ENCODE measurements at regions of chr4 and their contacts with region 1.

Region 1: DNA sequence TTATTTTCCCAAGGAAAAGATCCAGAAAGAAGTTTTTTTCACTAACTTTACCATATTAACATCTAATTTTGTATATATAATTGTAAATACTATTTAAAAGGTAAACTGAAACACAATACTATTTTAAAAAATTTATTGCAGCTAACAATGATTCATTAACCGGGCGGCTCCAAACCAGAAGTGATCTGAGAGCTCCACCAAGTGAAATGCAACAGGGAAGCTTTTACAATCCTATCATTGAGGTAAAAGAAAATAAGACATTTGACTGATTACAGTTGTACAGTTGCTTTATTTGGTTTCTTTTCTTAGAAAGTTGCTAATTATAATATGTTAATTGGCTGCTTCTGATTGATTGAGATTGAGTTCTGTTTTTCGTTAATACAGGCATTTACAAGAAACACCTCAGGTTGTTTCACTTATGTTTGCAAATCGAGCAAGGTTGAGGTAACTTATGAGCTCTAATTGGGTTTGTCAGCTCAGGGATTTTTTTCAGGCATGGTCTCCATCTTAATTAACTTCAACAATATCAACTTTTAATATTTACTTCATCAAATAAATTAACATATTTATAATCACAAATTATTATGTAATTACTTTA is 220.2 kb upstream of the UGT8 start:
- DNase-seq: peak; percentile 32
- H3K4me3 ChIP-seq: no peak overlapping the region
- H3K27ac ChIP-seq: no peak overlapping the region
- H3K4me1 ChIP-seq: peaks cover 6% of the 10 kb centered on the region
- H3K27me3 ChIP-seq: no peaks in the 10 kb centered on the region
- CTCF ChIP-seq: peak; percentile 73 to 74

Region 2: GRCh38 chr4:113547487-113548042 is 830.8 kb before region 1 on chr4:
- CTCF ChIA-PET with region 1: no interaction called
- dilution Hi-C with region 1: no loop called
- in situ Hi-C with region 1: no loop called
- intact Hi-C with region 1: loop called (anchors 5 kb)
- DNase-seq: peak; percentile 98
- H3K4me3 ChIP-seq: no peak overlapping the region
- H3K27ac ChIP-seq: peak overlapping the region; percentile 34
- H3K4me1 ChIP-seq: no peaks in the 10 kb centered on the region
- H3K27me3 ChIP-seq: no peaks in the 10 kb centered on the region
- CTCF ChIP-seq: peak; percentile 98 to 99

Region 3: DNA sequence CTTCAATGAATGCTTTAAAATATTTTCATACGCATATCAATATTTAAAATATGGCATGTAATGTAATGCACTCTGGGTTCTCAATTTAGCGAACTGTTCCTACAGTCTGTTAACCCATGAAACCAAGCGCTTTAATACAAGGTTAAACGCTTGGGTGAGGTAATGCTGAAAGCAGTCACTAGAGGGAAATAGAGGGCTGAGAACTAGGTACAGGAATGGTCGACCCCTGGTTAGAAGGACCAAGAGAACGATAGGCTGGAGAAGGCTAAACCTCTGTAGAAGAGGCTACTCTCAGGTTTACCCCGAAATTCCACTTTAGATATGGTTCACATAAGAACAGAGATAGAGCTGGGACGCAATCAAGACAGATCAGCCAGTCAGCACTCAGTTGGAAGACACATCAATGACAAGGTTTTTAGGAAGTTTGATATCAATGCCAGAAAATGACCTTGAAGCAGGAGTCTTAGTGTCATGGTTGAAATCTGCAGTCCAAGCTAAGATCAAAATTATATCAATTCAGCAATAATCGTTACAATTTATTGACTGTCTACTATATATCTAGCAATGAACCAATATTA is 425.9 kb before region 1 on chr4:
- CTCF ChIA-PET with region 1: interaction called, 4 read pairs
- dilution Hi-C with region 1: no loop called
- in situ Hi-C with region 1: no loop called
- intact Hi-C with region 1: loop called (anchors 1 kb)
- DNase-seq: peak; percentile 27
- H3K4me3 ChIP-seq: no peak overlapping the region
- H3K27ac ChIP-seq: no peak overlapping the region
- H3K4me1 ChIP-seq: no peaks in the 10 kb centered on the region
- H3K27me3 ChIP-seq: no peaks in the 10 kb centered on the region
- CTCF ChIP-seq: peak; percentile 69 to 75

Region 4: GRCh38 chr4:114132830-114133229 is 245.6 kb before region 1 on chr4:
- CTCF ChIA-PET with region 1: no interaction called
- dilution Hi-C with region 1: no loop called
- in situ Hi-C with region 1: no loop called
- intact Hi-C with region 1: loop called (anchors 2 kb)
- DNase-seq: peak; percentile 3
- H3K4me3 ChIP-seq: no peak overlapping the region
- H3K27ac ChIP-seq: no peak overlapping the region
- H3K4me1 ChIP-seq: no peaks in the 10 kb centered on the region
- H3K27me3 ChIP-seq: no peaks in the 10 kb centered on the region
- CTCF ChIP-seq: peak; percentile 34 to 47

Region 5: GRCh38 chr4:114479595-114479994 is 101.2 kb after region 1 on chr4:
- CTCF ChIA-PET with region 1: no interaction called
- dilution Hi-C with region 1: no loop called
- in situ Hi-C with region 1: no loop called
- intact Hi-C with region 1: no loop called
- DNase-seq: no peak
- H3K4me3 ChIP-seq: no peak overlapping the region
- H3K27ac ChIP-seq: no peak overlapping the region
- H3K4me1 ChIP-seq: no peaks in the 10 kb centered on the region
- H3K27me3 ChIP-seq: no peaks in the 10 kb centered on the region
- CTCF ChIP-seq: no peak